CD8-positive, alpha-beta T cell (primary cell): ENCODE measurements at regions of chr9 and their contacts with region 1.

Region 1: GRCh38 chr9:4762108-4762885 is 21.3 kb upstream of the AK3 start:
- DNase-seq: peak; percentile 61 to 87 (median 80)
- ATAC-seq: peak; percentile 80
- H3K4me3 ChIP-seq: no peak overlapping the region
- H3K4me3 Mint-ChIP-seq: peak overlapping the region; percentile 47
- H3K27ac ChIP-seq: no peak overlapping the region
- H3K27ac Mint-ChIP-seq: no peak overlapping the region
- H3K4me1 ChIP-seq: no peaks in the 10 kb centered on the region
- H3K4me1 Mint-ChIP-seq: peaks cover 10% of the 10 kb centered on the region
- H3K27me3 ChIP-seq: peaks cover 0 to 6% of the 10 kb centered on the region in 2 experiments
- H3K27me3 Mint-ChIP-seq: peaks cover 9% of the 10 kb centered on the region
- CTCF ChIP-seq: peak; percentile 87

Region 2: DNA sequence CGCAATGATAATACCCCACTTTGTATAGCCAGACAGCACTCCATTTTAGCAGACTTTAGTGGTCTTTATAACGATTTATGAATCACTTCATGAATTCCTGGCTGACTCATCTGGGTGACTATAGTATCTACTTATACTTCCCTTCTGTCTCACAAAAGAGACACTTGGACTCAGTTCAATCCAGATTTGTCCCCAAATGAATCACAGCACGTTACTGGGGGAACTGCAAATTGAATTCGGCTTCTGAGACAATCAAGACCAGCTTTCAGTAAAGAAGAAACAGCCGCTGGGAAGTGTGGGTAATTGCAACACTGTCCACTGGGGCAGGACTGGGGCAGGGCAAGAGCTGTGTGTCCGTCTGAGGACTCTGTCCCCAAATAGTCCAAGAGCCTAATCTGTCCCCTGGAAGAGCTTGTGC is 899.2 kb before region 1 on chr9:
- CTCF ChIA-PET with region 1: no interaction called
- POLR2A ChIA-PET with region 1: no interaction called
- intact Hi-C with region 1: no loop called
- DNase-seq: no peak
- ATAC-seq: no peak
- H3K4me3 ChIP-seq: no peak overlapping the region
- H3K4me3 Mint-ChIP-seq: no peak overlapping the region
- H3K27ac ChIP-seq: no peak overlapping the region
- H3K27ac Mint-ChIP-seq: no peak overlapping the region
- H3K4me1 ChIP-seq: no peaks in the 10 kb centered on the region
- H3K4me1 Mint-ChIP-seq: no peaks in the 10 kb centered on the region
- H3K27me3 ChIP-seq: no peaks in the 10 kb centered on the region
- H3K27me3 Mint-ChIP-seq: peaks cover 4% of the 10 kb centered on the region
- CTCF ChIP-seq: no peak

Region 3: DNA sequence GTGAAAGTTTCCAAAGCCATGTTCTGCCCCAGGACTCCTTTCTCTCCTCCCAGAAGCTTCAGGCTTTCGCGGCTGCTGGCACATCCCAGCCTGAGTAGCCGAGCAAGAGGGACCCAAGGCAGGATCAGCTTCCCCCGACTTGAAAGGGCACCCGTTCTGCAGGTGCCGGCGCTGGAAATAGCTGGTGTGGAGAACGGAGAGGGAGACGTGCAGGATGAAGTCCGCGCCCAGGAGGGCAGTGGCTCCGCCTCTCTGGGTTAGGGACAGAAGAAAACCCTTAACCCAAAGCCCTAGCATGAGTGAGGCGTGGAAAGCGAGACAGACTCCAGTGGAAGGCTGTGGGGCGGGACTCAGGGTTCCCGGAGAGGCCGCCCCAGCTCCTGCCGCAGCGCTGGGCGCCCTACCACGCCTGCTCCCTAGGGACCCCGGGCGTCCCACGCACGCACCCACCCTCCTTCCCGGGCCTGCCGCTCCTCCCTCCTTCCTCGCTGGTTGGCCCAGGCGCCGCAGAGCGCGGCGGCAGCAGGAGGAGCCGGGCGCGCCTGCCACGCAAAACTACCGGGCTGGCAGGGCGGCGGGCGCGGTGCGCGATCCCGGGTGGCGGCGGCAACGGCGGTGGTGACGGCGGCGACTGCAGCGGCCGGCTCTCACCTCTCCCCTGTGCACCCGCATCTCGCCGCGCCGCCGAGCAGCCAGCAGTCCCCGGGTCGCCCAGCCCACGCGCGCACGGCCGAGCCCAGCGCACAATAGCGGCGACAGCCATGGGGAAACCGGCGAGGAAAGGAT is 272.2 kb before region 1 on chr9 and contains the start of gene SLC1A1:
- CTCF ChIA-PET with region 1: no interaction called
- POLR2A ChIA-PET with region 1: no interaction called
- intact Hi-C with region 1: no loop called
- DNase-seq: peak in 5 of 9 experiments; percentile 19 to 52 (median 40)
- ATAC-seq: peak; percentile 65
- H3K4me3 ChIP-seq: peak within 1 kb of the TSS; percentile 34 to 65
- H3K4me3 Mint-ChIP-seq: peak within 1 kb of the TSS; percentile 84
- H3K27ac ChIP-seq: no peak within 1 kb of the TSS
- H3K27ac Mint-ChIP-seq: no peak within 1 kb of the TSS
- H3K4me1 ChIP-seq: peaks cover 23% of the 10 kb centered on the region
- H3K4me1 Mint-ChIP-seq: peaks cover 29% of the 10 kb centered on the region
- H3K27me3 ChIP-seq: peaks cover 12 to 29% of the 10 kb centered on the region in 2 experiments
- H3K27me3 Mint-ChIP-seq: peaks cover 45% of the 10 kb centered on the region
- CTCF ChIP-seq: no peak
- total RNA-seq, gene SLC1A1: not detected

Region 4: DNA sequence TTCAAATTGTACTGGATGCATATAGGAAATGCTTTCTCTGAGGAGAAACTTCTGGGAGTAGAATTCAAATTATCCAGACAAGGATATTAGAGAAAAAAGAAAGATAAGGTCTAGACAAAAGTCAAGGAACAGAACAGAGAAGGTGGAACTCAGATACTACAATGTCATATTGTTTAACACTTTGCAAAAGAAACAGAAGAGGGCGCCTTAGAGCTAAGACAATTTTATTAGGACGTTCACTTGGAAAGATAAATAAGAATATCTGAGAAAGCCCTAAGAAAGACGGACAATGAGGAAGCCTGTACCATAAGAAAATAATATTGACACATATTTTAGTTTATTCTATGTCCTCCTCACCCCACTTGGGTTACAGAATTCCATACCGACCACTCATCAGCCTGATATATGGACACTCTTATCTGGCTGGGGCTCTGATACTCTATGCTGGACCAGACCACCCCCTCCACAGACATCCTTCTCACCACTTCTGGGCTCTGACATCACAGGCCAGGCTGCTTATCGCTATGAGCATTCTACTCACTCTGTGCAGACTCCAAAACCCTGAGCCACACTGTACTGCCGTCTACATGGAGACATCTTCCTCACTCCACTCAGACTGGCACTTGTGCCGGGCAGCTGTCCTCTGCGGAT is 12.1 kb before region 1 on chr9:
- CTCF ChIA-PET with region 1: interaction called, 13 read pairs
- POLR2A ChIA-PET with region 1: interaction called, 3 read pairs
- intact Hi-C with region 1: no loop called
- DNase-seq: peak in 2 of 9 experiments; percentile 48 to 58
- ATAC-seq: peak; percentile 58
- H3K4me3 ChIP-seq: no peak overlapping the region
- H3K4me3 Mint-ChIP-seq: no peak overlapping the region
- H3K27ac ChIP-seq: no peak overlapping the region
- H3K27ac Mint-ChIP-seq: no peak overlapping the region
- H3K4me1 ChIP-seq: no peaks in the 10 kb centered on the region
- H3K4me1 Mint-ChIP-seq: peaks cover 3% of the 10 kb centered on the region
- H3K27me3 ChIP-seq: no peaks in the 10 kb centered on the region
- H3K27me3 Mint-ChIP-seq: no peaks in the 10 kb centered on the region
- CTCF ChIP-seq: peak; percentile 72

Region 5: GRCh38 chr9:4792572-4793458 is 30.5 kb after region 1 on chr9 and contains the start of gene RCL1:
- CTCF ChIA-PET with region 1: interaction called, 9 read pairs
- POLR2A ChIA-PET with region 1: interaction called, 3 read pairs
- intact Hi-C with region 1: loop called (anchors 2 kb)
- DNase-seq: peak; percentile 92 to 98 (median 95)
- ATAC-seq: peak; percentile 90
- H3K4me3 ChIP-seq: peak within 1 kb of the TSS; percentile 92 to 98
- H3K4me3 Mint-ChIP-seq: peak within 1 kb of the TSS; percentile 95
- H3K27ac ChIP-seq: peak within 1 kb of the TSS; percentile 90 to 92
- H3K27ac Mint-ChIP-seq: peak within 1 kb of the TSS; percentile 96
- H3K4me1 ChIP-seq: peaks cover 30% of the 10 kb centered on the region
- H3K4me1 Mint-ChIP-seq: peaks cover 47% of the 10 kb centered on the region
- H3K27me3 ChIP-seq: no peaks in the 10 kb centered on the region
- H3K27me3 Mint-ChIP-seq: no peaks in the 10 kb centered on the region
- CTCF ChIP-seq: no peak
- total RNA-seq, gene RCL1: 30.8 to 35.0 TPM

Region 6: GRCh38 chr9:4923580-4924544 is 161.6 kb after region 1 on chr9:
- CTCF ChIA-PET with region 1: interaction called, 80 read pairs
- POLR2A ChIA-PET with region 1: no interaction called
- intact Hi-C with region 1: loop called in 1 of 2 experiments (anchors 1 kb)
- DNase-seq: peak in 3 of 9 experiments; percentile 9 to 55 (median 49)
- ATAC-seq: peak; percentile 46
- H3K4me3 ChIP-seq: no peak overlapping the region
- H3K4me3 Mint-ChIP-seq: no peak overlapping the region
- H3K27ac ChIP-seq: no peak overlapping the region
- H3K27ac Mint-ChIP-seq: no peak overlapping the region
- H3K4me1 ChIP-seq: no peaks in the 10 kb centered on the region
- H3K4me1 Mint-ChIP-seq: peaks cover 2% of the 10 kb centered on the region
- H3K27me3 ChIP-seq: no peaks in the 10 kb centered on the region
- H3K27me3 Mint-ChIP-seq: no peaks in the 10 kb centered on the region
- CTCF ChIP-seq: peak; percentile 37

Region 7: DNA sequence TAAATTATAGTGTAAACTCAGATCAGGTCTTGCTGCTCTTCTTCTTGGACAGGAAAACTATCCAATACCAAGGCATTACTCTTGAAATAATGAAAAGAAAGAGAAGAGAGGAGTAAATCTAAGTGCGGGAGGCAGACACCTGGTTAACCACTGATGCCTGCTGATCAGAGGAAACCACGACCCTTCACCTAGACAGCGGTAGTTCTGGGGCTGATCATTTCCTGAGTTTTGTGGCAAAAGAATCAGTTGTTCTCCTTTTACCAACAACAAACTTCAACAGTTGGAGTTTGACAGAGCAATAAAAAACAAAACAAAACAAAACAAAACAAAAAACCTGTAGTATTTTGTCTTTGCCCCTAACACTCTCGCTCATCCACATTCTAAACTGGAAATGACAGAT is 574.4 kb after region 1 on chr9:
- CTCF ChIA-PET with region 1: no interaction called
- POLR2A ChIA-PET with region 1: no interaction called
- intact Hi-C with region 1: no loop called
- DNase-seq: peak in 5 of 9 experiments; percentile 23 to 69 (median 47)
- ATAC-seq: peak; percentile 19
- H3K4me3 ChIP-seq: peak overlapping the region; percentile 2 to 31
- H3K4me3 Mint-ChIP-seq: peak overlapping the region; percentile 71
- H3K27ac ChIP-seq: peak overlapping the region; percentile 28 to 30
- H3K27ac Mint-ChIP-seq: peak overlapping the region; percentile 89
- H3K4me1 ChIP-seq: peaks cover 27% of the 10 kb centered on the region
- H3K4me1 Mint-ChIP-seq: peaks cover 54% of the 10 kb centered on the region
- H3K27me3 ChIP-seq: no peaks in the 10 kb centered on the region
- H3K27me3 Mint-ChIP-seq: no peaks in the 10 kb centered on the region
- CTCF ChIP-seq: no peak

Region 8: GRCh38 chr9:5425006-5425628 is 662.8 kb after region 1 on chr9:
- CTCF ChIA-PET with region 1: interaction called, 3 read pairs
- POLR2A ChIA-PET with region 1: no interaction called
- intact Hi-C with region 1: loop called in 1 of 2 experiments (anchors 5 kb)
- DNase-seq: peak in 2 of 9 experiments; percentile 56 to 65
- ATAC-seq: peak; percentile 59
- H3K4me3 ChIP-seq: no peak overlapping the region
- H3K4me3 Mint-ChIP-seq: no peak overlapping the region
- H3K27ac ChIP-seq: no peak overlapping the region
- H3K27ac Mint-ChIP-seq: no peak overlapping the region
- H3K4me1 ChIP-seq: no peaks in the 10 kb centered on the region
- H3K4me1 Mint-ChIP-seq: peaks cover 9% of the 10 kb centered on the region
- H3K27me3 ChIP-seq: no peaks in the 10 kb centered on the region
- H3K27me3 Mint-ChIP-seq: no peaks in the 10 kb centered on the region
- CTCF ChIP-seq: peak; percentile 88

Region 9: DNA sequence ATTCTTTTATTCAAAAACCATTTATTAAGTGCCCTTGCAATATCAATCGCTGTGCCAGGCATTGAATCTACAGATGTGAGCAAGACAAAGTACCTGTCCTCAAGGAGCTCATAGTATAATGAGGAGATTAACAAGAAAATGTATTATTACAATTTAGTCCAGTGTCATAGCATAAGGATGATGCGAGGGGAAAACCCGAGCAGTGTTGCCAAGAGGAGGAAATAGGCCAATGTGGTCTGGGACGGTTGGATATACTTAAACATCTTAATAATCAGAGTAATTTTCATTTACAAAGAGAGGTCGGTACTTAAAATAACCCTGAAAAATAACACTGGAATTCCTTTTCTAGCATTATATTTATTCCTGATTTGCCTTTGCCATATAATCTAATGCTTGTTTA is 706.6 kb after region 1 on chr9:
- CTCF ChIA-PET with region 1: no interaction called
- POLR2A ChIA-PET with region 1: no interaction called
- intact Hi-C with region 1: no loop called
- DNase-seq: no peak
- ATAC-seq: no peak
- H3K4me3 ChIP-seq: no peak overlapping the region
- H3K4me3 Mint-ChIP-seq: no peak overlapping the region
- H3K27ac ChIP-seq: no peak overlapping the region
- H3K27ac Mint-ChIP-seq: no peak overlapping the region
- H3K4me1 ChIP-seq: no peaks in the 10 kb centered on the region
- H3K4me1 Mint-ChIP-seq: no peaks in the 10 kb centered on the region
- H3K27me3 ChIP-seq: no peaks in the 10 kb centered on the region
- H3K27me3 Mint-ChIP-seq: no peaks in the 10 kb centered on the region
- CTCF ChIP-seq: no peak